PC-9 (cell line): ENCODE measurements at regions of chr15 and their contacts with region 1.

Region 1: GRCh38 chr15:98800437-98801233 is 152.3 kb downstream of the IGF1R start:
- DNase-seq: peak; percentile 50 to 81
- H3K4me3 ChIP-seq: peak overlapping the region; percentile 49; the same call in 1 of the 2 replicates
- H3K27ac ChIP-seq: peak overlapping the region; percentile 85
- H3K4me1 ChIP-seq: peaks cover 67% of the 10 kb centered on the region
- H3K27me3 ChIP-seq: no peaks in the 10 kb centered on the region
- CTCF ChIP-seq: no peak

Region 2: GRCh38 chr15:98850961-98851573 is 50.4 kb after region 1 on chr15:
- CTCF ChIA-PET with region 1: interaction called, 4 read pairs
- POLR2A ChIA-PET with region 1: no interaction called
- intact Hi-C with region 1: loop called (anchors 1 kb)
- DNase-seq: peak; percentile 35 to 72
- H3K4me3 ChIP-seq: peak overlapping the region; percentile 59; the same call in 1 of the 2 replicates
- H3K27ac ChIP-seq: peak overlapping the region; percentile 31; the same call in 1 of the 2 replicates
- H3K4me1 ChIP-seq: peaks cover 50% of the 10 kb centered on the region
- H3K27me3 ChIP-seq: no peaks in the 10 kb centered on the region
- CTCF ChIP-seq: peak; percentile 79

Region 3: DNA sequence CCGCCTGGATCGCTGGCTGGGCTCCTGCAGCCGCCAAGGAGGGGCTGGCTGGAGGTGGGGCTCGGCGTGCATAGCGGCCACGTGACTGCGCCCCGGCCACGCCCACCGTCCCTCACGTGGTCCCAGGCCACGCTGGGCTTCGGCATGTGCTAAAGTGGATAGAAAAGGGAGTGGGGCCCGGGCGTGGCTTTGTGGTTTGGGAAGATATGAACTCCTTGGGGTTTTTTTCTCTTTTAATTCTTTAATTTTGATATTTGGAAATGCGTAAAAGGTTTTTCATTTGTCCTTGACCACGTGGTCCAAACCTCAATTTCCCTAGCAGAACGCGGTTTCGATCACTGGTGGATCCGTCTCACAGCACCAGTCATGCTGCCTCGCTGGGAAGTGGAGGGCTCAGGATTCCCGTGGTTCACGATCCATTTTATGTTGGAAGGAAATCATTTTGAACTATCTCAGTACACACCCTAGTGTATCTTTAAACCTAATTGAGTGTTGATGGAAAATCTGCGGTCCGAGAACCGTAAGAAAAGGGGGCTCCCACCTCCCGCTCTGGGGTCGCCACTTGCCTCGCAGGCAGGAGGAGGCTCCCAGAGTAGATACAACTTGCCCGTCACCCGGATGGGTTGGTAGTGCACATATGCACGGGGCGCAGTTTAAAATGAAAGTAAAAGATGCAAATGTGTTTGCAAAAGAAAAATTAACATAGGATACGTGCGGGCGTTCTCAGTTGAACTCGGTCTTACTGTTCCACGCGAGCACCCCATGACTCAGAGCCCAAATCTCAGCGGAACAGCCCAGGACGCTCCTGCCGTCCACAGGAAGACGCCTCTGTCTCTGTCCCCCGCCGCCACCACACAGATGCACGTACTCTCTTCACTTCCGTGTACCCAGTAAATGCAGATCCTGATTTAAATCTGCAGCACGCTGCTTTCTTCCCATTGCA is 65.0 kb after region 1 on chr15:
- CTCF ChIA-PET with region 1: no interaction called
- POLR2A ChIA-PET with region 1: no interaction called
- intact Hi-C with region 1: no loop called
- DNase-seq: no peak
- H3K4me3 ChIP-seq: no peak overlapping the region
- H3K27ac ChIP-seq: no peak overlapping the region
- H3K4me1 ChIP-seq: peaks cover 33% of the 10 kb centered on the region
- H3K27me3 ChIP-seq: no peaks in the 10 kb centered on the region
- CTCF ChIP-seq: no peak